GM10248 (cell line): ENCODE measurements at regions of chr15 and their contacts with region 1.

Region 1: DNA sequence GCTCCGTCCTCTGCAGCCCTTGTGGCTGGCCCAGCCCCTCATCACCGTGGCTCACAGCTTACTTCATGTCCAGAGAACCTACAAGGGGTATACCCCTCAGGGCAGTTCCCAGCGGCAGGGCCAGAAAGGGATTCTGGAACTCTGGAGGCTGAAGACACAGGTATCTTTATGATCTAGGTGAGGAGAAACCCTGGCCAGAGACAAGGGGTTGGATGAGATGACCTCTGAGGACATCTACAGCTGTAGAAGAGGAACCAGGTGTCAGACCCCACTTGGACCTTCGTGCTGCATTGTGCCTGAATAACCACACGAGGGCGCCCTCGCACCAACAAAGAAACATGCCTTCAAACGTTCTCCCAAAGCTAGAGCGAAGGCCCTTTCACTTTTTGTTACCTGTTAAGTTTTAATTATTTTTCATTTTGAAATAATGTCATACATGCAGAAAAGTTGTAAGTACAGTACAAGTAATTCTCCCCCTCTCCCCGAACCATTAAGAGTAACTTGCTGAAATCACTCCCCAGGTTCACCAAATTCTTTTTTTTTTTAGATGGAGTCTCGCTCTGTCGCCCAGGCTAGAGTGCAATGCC is 118.7 kb upstream of the SMAD3 start:
- DNase-seq: peak; percentile 84
- CTCF ChIP-seq: peak; percentile 94

Region 2: GRCh38 chr15:66883322-66883911 is 63.3 kb before region 1 on chr15:
- CTCF ChIA-PET with region 1: no interaction called
- POLR2A ChIA-PET with region 1: no interaction called
- DNase-seq: no peak
- CTCF ChIP-seq: no peak

Region 3: DNA sequence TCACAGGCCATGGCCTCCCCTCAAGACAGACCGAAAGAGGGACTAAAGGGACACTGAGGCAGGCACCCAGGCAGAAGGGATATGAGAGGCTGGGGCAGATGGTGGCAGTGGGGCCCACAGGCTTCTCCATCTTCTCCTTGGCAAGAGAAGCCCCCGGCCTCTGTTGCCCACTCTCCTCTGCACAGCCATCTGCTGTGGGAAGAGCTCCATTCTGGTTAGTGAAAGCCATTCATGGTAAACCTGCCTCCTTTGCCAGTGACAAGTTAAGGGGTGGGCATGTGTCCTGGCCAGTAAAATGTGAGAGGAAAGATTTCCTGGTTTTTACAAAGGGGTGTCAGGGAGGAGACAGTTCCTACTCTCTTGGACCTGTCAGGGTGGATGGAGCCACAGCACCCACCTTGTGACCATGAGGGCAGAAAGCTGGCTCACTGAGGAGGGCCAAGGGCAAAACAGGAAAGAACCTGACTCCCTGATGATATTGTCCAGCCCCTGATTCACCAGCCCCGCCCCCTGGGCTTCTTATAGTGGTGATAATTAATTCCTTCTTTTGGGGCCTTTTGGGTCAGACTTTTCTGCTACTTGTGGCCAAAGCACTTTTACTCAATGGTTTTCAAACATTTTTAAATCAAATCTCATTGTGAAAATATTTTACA is 11.7 kb before region 1 on chr15:
- CTCF ChIA-PET with region 1: interaction called, 10 read pairs
- POLR2A ChIA-PET with region 1: no interaction called
- DNase-seq: no peak
- CTCF ChIP-seq: no peak

Region 4: DNA sequence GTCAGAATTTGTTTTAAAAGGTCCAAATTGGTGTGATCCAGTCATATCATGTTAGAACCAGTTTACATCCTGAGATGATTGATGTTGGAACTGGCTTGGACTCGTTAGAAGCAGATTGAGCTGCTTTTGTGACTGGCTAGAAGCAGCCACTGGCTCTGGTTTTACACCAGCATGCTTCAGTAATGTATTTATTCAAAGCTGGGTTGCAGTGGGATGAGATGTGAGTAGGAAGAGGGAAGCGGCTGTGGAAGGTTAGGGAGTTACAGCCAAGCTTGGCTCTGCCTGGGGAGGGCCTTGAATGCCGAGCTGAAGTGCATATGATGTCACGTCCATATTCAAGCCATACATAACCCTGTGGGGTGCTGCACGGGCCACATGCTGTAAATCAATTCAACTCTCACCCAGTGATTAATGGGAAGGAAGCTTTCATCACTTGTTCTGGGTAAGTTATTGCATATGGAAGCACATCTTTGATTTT is 14.8 kb after region 1 on chr15:
- CTCF ChIA-PET with region 1: interaction called, 13 read pairs
- POLR2A ChIA-PET with region 1: no interaction called
- DNase-seq: no peak
- CTCF ChIP-seq: no peak

Region 5: GRCh38 chr15:67080900-67081431 is 134.3 kb after region 1 on chr15:
- CTCF ChIA-PET with region 1: interaction called, 23 read pairs
- POLR2A ChIA-PET with region 1: no interaction called
- DNase-seq: peak; percentile 80
- CTCF ChIP-seq: peak; percentile 38

Region 6: GRCh38 chr15:67303490-67304363 is 357.1 kb after region 1 on chr15:
- CTCF ChIA-PET with region 1: interaction called, 65 read pairs
- POLR2A ChIA-PET with region 1: no interaction called
- DNase-seq: peak; percentile 30
- CTCF ChIP-seq: peak; percentile 54

Region 7: DNA sequence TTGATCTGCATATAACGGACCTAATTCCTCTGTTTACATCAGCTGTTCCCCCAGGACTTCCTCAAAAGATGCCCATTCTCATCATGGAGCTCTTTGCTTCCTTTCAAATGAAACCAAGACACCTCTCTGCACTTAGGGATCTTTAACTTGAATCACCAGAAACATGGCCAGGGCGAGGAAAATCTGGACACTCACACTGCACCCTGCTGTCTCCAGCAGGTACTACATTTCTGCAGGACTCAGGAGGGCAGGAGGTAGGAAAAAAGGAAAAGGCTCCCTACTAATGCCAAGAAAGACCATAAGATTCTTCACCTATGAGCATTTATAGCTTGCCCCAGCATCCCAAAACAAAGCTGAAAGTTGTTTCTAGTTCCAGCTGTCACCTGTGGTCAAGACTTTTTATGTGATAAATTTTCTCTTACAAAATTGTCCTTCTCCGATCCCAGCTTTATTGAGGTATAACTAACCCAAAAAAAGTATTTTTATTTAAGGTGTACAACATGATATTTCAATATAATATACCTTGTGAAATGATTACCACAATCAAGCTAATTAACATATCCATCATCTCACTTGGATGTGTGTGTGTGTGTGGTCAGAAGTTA is 486.9 kb after region 1 on chr15:
- CTCF ChIA-PET with region 1: interaction called, 24 read pairs
- POLR2A ChIA-PET with region 1: no interaction called
- DNase-seq: peak; percentile 52
- CTCF ChIP-seq: peak; percentile 71